ENCODE measurements at regions of chr7 and their contacts with region 1.

Region 1: DNA sequence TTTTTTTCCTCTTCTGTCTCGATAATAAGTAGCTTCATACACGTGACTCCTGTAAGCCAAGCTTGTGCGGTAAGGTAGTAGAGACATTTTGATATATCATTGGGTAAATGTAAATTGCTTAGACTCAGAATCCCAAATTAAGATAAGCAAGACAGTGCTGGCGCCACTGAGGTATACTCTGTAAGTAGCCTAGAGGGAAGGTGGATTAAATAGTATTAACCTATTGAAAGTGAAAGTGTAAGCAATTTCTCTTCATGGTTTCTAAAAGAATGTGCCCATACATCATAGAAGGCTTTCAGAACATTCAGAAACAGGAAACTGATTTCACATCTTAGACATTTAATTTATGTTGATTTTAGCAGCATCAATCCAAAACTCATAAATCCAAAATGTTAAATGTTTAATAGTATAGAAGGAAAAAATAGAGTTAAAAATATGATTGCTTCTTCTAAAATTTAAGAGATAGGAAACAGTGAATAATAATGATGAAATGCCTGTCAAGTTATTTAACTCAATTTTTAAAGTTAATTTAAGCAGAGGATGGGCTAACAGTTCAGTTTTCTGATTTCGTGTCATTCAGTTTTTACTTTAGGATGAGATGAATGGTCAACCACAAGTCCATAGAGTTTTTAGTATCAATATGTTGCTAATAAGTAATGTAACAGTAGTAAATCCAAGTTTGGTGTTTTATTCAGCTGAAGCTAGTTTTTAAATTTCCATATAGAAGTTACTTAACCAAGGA is 36.8 kb downstream of the LRRC72 start:
- DNase-seq: no peak
- H3K4me3 ChIP-seq: no peak overlapping the region
- H3K27ac ChIP-seq: no peak overlapping the region
- H3K4me1 ChIP-seq: no peaks in the 10 kb centered on the region
- H3K27me3 ChIP-seq: no peaks in the 10 kb centered on the region
- CTCF ChIP-seq: no peak
- POLR2A ChIP-seq: no peak

Region 2: DNA sequence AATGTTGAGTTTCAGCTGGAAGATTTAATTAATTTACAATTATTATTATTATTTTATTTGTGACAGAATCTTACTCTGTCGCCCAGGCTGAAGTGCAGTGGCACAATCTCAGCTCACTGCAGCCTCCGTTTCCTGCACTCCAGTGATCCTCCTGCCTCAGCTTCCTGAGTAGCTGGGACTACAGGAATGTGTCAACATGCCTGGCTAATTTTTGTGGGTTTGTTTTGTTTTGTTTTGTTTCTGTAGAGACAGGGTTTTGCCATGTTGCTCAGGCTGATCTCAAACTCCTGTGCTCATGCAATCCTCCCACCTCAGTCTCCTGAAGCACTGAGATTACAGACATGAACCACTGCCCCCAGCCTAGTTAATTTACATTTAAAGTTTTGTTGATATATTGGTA is 783.2 kb before region 1 on chr7:
- intact Hi-C with region 1: no loop called
- DNase-seq: no peak
- H3K4me3 ChIP-seq: no peak overlapping the region
- H3K27ac ChIP-seq: no peak overlapping the region
- H3K4me1 ChIP-seq: no peaks in the 10 kb centered on the region
- H3K27me3 ChIP-seq: no peaks in the 10 kb centered on the region
- CTCF ChIP-seq: no peak
- POLR2A ChIP-seq: no peak

Region 3: GRCh38 chr7:16078076-16078952 is 485.1 kb before region 1 on chr7:
- intact Hi-C with region 1: loop called in 1 of 2 experiments (anchors 2 kb)
- DNase-seq: peak in 5 of 7 donors; percentile 20 to 41 (median 35)
- H3K4me3 ChIP-seq: no peak overlapping the region
- H3K27ac ChIP-seq: no peak overlapping the region
- H3K4me1 ChIP-seq: no peaks in the 10 kb centered on the region
- H3K27me3 ChIP-seq: no peaks in the 10 kb centered on the region
- CTCF ChIP-seq: peak; percentile 34 to 69 (median 60)
- POLR2A ChIP-seq: no peak